ENCODE measurements at regions of chr22 and their contacts with region 1.

Region 1: GRCh38 chr22:44729391-44730021 is 22.9 kb upstream of the ARHGAP8 start:
- DNase-seq: no peak
- H3K4me3 ChIP-seq: no peak overlapping the region
- H3K27ac ChIP-seq: peak overlapping the region; percentile 52
- H3K27me3 ChIP-seq: no peaks in the 10 kb centered on the region
- CTCF ChIP-seq: peak; percentile 57

Region 2: GRCh38 chr22:44437221-44438055 is 292.1 kb before region 1 on chr22:
- CTCF ChIA-PET with region 1: no interaction called
- POLR2A ChIA-PET with region 1: no interaction called
- DNase-seq: no peak
- H3K4me3 ChIP-seq: no peak overlapping the region
- H3K27ac ChIP-seq: no peak overlapping the region
- H3K27me3 ChIP-seq: no peaks in the 10 kb centered on the region
- CTCF ChIP-seq: no peak

Region 3: DNA sequence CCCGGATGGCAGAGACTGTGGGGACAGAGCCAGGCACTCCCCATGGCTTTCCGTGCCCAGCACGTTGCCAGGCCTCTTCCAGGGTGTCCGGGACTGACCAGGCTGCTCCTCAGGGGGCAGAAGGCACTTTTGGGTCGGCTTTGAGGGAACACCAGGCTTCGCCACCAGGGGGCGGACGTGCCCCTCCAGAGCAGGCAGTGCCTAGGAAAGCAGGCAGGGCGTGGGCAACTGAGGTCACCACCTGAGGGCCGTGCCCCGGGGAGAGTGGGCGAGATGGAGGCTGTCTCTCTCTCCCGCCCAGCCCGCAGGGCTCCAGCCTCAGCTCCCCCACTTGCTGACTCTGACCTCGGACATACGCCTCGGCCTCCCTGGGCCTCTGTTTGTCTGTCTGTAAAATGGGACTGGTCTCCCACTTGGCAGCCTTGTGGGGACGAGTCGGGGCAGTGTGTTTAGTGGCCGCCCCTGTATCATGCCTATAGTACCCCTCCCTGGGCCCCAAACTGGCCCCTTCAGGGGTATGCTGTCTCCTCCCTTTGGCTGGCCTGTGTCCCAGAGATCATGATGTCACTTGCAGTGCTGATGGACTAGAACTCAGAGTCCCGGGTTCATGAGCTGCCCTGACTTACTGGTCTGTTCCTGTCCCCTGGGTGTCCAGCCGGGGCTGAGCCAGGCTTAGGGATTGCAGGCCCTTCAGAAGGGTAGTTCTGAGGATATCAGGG is 31.9 kb before region 1 on chr22:
- CTCF ChIA-PET with region 1: interaction called, 4 read pairs
- POLR2A ChIA-PET with region 1: interaction called, 13 read pairs
- DNase-seq: peak; percentile 27
- H3K4me3 ChIP-seq: no peak overlapping the region
- H3K27ac ChIP-seq: peak overlapping the region; percentile 94
- H3K27me3 ChIP-seq: no peaks in the 10 kb centered on the region
- CTCF ChIP-seq: peak; percentile 93

Region 4: DNA sequence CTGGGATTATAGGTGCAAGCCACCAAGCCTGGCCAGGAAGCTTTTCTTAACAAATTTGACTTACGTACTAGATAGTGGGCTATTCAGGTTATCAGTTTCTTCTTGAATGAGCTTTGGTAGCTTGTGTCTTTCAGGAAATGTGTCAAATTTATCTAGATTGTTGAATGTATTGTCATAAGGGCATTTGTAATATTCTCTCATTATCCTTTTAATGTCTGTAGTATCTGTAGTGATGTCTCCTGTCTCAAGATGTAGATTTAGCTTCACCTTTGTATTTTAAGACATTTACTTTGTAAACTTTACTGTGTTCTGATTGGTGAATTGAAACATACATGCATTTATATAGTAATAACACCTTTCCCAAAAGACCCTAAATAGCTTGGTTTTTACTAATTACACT is 43.6 kb after region 1 on chr22:
- CTCF ChIA-PET with region 1: no interaction called
- POLR2A ChIA-PET with region 1: interaction called, 12 read pairs
- DNase-seq: no peak
- H3K4me3 ChIP-seq: no peak overlapping the region
- H3K27ac ChIP-seq: no peak overlapping the region
- H3K27me3 ChIP-seq: peaks cover 2% of the 10 kb centered on the region
- CTCF ChIP-seq: no peak

Measured in AG04450 (cell line).